CD4-positive, alpha-beta memory T cell (primary cell): ENCODE measurements at regions of chr1 and their contacts with region 1.

Region 1: DNA sequence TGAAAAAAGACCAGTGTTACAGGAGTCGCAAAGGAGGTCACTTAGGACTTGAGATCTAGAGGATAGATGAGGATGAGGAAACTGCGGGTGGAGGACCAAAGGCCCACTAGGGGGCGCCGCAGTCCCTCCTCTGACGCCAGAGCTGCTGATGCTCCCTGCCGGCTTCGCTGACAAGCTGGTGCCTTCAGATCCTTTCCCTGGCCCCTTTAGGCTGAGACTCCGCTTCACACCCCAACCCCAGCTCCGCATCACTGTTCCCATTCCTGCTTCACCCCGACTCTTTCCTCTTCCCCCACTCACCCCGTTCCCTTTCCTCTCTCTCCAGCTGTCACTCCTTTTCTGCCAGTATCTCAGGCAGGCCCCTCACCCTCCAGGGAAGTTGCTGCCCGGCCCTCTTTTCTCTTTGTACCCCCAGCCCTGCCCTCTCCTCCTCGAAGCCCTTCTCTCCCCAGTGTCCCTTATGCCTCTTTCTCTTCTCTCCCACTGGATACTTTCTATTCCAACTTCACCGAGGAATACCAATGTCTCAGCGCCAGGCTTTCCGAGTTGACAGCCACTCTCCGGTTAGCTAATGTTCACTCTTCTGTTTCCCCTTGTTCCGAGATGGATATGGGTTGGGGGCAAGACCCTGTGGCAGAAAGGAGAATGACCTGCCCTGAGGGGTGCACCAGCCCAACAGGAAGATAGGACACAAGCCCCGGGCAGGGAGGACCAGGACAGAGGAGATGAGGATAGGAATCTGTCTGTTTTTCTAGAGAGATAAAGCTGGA is 4.5 kb downstream of the KCNJ9 start:
- DNase-seq: peak; percentile 66 to 68 (median 67)
- H3K4me3 ChIP-seq: no peak overlapping the region
- H3K4me3 Mint-ChIP-seq: peak overlapping the region in 3 of 8 donors; percentile 6 to 70 (median 45)
- H3K27ac ChIP-seq: no peak overlapping the region
- H3K27ac Mint-ChIP-seq: peak overlapping the region in 6 of 7 donors; percentile 51 to 88 (median 78)
- H3K4me1 ChIP-seq: peaks cover 3% of the 10 kb centered on the region
- H3K4me1 Mint-ChIP-seq: peaks cover 8 to 28% (median 19%) of the 10 kb centered on the region in 4 donors
- H3K27me3 ChIP-seq: peaks cover 18% of the 10 kb centered on the region
- H3K27me3 Mint-ChIP-seq: peaks cover 16 to 18% of the 10 kb centered on the region in 2 donors

Region 2: DNA sequence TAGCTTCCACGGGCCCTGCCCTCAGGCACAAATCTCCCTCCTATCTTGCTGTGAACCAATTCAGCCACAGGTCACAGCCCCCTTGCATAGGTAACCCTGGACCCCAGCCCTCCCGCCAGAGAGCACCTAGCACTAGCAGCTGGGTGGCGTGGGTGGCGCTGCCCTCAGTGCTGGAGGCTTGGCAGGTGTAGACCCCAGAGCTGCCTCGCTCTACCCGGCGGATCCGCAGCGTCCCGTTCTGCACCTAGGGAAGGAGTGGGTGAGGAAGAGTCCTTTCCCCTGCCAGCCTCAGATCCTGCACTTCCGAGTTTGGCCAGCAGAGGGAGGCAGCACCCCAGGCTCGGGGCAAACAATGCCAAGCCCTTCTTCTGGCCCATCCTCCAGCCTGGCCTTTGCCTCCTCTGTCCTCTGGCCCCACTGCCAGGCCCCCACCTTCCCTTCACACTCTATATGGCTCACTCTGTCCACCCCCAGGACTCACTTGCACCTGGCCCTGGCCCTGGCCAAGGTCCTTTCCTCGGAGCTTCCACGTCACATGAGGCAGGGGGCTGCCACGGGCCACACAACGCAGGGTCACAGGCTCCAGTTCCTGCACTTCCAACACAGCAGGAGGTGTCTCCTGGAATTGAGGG is 149.5 kb before region 1 on chr1:
- CTCF ChIA-PET with region 1: interaction called, 7 read pairs
- POLR2A ChIA-PET with region 1: no interaction called
- intact Hi-C with region 1: loop called (anchors 2 kb)
- DNase-seq: peak; percentile 69 to 81 (median 73)
- H3K4me3 ChIP-seq: no peak overlapping the region
- H3K4me3 Mint-ChIP-seq: peak overlapping the region in 1 of 8 donors; percentile 26
- H3K27ac ChIP-seq: no peak overlapping the region
- H3K27ac Mint-ChIP-seq: peak overlapping the region in 3 of 7 donors; percentile 40 to 68 (median 45)
- H3K4me1 ChIP-seq: peaks cover 15% of the 10 kb centered on the region
- H3K4me1 Mint-ChIP-seq: peaks cover 0 to 7% (median 3%) of the 10 kb centered on the region in 4 donors
- H3K27me3 ChIP-seq: no peaks in the 10 kb centered on the region
- H3K27me3 Mint-ChIP-seq: peaks cover 6 to 10% of the 10 kb centered on the region in 2 donors

Region 3: DNA sequence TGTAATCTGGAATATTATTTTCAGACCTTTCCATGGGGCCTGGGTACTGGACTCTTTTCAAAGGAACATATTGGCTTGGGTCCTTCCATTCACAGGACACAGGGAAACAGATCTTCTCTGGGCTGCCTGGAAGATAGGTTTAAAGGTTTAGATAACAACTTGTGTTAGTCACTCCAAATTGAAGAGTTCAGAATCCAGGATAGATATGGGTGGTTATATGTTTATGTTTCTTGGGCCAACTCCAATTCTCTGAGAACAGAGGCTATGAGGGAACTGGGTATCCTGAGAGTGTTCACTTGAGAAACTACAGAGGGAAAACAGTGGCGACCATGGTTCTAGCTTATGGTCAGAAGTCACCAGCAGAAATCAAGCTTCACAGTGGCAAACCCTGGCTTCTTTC is 45.4 kb before region 1 on chr1:
- CTCF ChIA-PET with region 1: interaction called, 141 read pairs
- POLR2A ChIA-PET with region 1: no interaction called
- intact Hi-C with region 1: no loop called
- DNase-seq: no peak
- H3K4me3 ChIP-seq: no peak overlapping the region
- H3K4me3 Mint-ChIP-seq: no peak overlapping the region
- H3K27ac ChIP-seq: no peak overlapping the region
- H3K27ac Mint-ChIP-seq: no peak overlapping the region
- H3K4me1 ChIP-seq: no peaks in the 10 kb centered on the region
- H3K4me1 Mint-ChIP-seq: no peaks in the 10 kb centered on the region
- H3K27me3 ChIP-seq: no peaks in the 10 kb centered on the region
- H3K27me3 Mint-ChIP-seq: peaks cover 5 to 6% of the 10 kb centered on the region in 2 donors

Region 4: DNA sequence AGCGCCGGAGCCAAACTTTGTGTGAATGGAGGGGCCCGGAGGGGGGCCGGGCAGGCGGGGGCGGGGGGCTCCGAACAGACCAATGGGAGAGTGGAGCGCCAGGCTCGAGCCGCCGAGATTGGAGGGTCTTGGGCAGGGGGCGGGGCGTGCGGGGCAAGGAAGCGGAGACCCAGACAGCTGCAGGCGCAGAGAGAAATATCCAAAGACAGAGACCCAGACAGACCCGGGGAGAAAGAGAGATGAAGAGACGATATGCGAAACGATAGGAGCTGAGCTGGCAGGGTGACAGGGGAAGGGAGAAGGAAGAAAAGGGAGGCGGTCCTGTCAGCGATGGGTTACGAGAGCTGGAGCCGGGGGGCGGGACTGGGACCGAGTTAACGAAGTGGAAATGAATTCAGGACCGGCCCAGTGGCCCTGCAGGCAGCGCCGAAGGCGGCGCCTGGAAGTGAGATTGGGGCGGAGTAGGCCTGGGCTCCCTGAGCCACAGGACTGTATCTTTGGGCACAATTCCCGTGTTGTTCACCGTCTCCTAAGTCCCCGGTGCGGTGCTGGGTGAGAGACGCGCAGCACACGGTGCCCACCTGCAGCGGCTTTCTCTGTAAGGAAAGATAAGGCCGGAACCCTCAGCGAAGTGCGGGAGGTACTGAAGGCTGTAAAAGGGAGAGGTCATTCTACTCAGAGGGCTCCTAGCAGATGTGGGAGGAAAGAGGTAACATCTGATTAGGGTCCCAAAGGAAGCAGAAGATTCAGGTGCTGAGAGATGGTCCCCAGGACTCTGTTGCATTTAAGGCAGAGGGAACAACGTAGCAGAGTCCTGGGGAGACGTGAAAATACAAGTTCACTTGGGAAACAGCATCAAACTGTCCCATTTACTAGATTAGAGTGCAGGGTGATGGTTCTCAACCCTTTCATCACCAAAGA is 15.4 kb before region 1 on chr1:
- CTCF ChIA-PET with region 1: interaction called, 30 read pairs
- POLR2A ChIA-PET with region 1: no interaction called
- intact Hi-C with region 1: no loop called
- DNase-seq: peak; percentile 47 to 68 (median 51)
- H3K4me3 ChIP-seq: peak overlapping the region in 1 of 2 donors; percentile 60
- H3K4me3 Mint-ChIP-seq: peak overlapping the region; percentile 85 to 97 (median 92)
- H3K27ac ChIP-seq: no peak overlapping the region
- H3K27ac Mint-ChIP-seq: peak overlapping the region in 5 of 7 donors; percentile 53 to 86 (median 60)
- H3K4me1 ChIP-seq: peaks cover 15% of the 10 kb centered on the region
- H3K4me1 Mint-ChIP-seq: peaks cover 6 to 12% (median 9%) of the 10 kb centered on the region in 4 donors
- H3K27me3 ChIP-seq: peaks cover 20% of the 10 kb centered on the region
- H3K27me3 Mint-ChIP-seq: peaks cover 26 to 51% of the 10 kb centered on the region in 2 donors

Region 5: GRCh38 chr1:160144921-160145320 is 59.0 kb after region 1 on chr1:
- CTCF ChIA-PET with region 1: no interaction called
- POLR2A ChIA-PET with region 1: no interaction called
- intact Hi-C with region 1: no loop called
- DNase-seq: no peak
- H3K4me3 ChIP-seq: no peak overlapping the region
- H3K4me3 Mint-ChIP-seq: no peak overlapping the region
- H3K27ac ChIP-seq: no peak overlapping the region
- H3K27ac Mint-ChIP-seq: no peak overlapping the region
- H3K4me1 ChIP-seq: no peaks in the 10 kb centered on the region
- H3K4me1 Mint-ChIP-seq: no peaks in the 10 kb centered on the region
- H3K27me3 ChIP-seq: no peaks in the 10 kb centered on the region
- H3K27me3 Mint-ChIP-seq: peaks cover 11 to 23% of the 10 kb centered on the region in 2 donors

Region 6: GRCh38 chr1:160219062-160219929 is 133.4 kb after region 1 on chr1:
- CTCF ChIA-PET with region 1: no interaction called
- POLR2A ChIA-PET with region 1: no interaction called
- intact Hi-C with region 1: no loop called
- DNase-seq: no peak
- H3K4me3 ChIP-seq: no peak overlapping the region
- H3K4me3 Mint-ChIP-seq: no peak overlapping the region
- H3K27ac ChIP-seq: no peak overlapping the region
- H3K27ac Mint-ChIP-seq: peak overlapping the region in 3 of 7 donors; percentile 7 to 46 (median 16)
- H3K4me1 ChIP-seq: no peaks in the 10 kb centered on the region
- H3K4me1 Mint-ChIP-seq: no peaks in the 10 kb centered on the region
- H3K27me3 ChIP-seq: no peaks in the 10 kb centered on the region
- H3K27me3 Mint-ChIP-seq: no peaks in the 10 kb centered on the region

Region 7: DNA sequence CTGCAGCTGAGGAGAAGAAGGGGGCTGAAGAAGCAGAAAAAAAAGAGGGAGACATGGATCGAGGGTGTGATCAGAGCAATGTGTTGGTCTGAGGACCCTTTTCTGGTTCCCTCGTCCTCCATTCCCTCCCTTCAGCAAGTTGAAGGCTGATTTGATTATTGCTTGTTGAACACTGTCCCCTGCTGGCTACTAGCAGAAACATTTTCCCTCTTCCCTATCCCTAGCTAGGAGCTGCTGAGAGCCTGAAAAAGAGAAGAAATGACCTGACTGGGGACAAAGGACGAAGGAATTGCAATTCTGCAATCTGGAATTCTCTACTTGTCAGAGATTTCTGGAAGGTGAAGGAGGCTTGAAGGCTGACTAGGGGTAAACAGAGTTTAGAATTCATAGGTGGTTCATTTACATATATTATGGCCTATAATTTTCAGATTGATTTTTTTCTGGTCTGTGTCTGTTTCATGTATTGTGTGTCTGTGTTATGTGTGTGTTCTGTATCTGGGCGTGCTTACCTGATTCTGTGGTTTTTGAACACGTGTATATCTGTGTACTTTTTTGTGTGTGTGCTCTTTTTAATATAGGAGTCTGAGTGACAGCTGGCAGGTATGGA is 290.8 kb after region 1 on chr1:
- CTCF ChIA-PET with region 1: interaction called, 23 read pairs
- POLR2A ChIA-PET with region 1: no interaction called
- intact Hi-C with region 1: loop called (anchors 5 kb)
- DNase-seq: peak in 4 of 5 donors; percentile 39 to 46 (median 44)
- H3K4me3 ChIP-seq: no peak overlapping the region
- H3K4me3 Mint-ChIP-seq: peak overlapping the region in 3 of 8 donors; percentile 17 to 62 (median 48)
- H3K27ac ChIP-seq: no peak overlapping the region
- H3K27ac Mint-ChIP-seq: peak overlapping the region in 1 of 7 donors; percentile 31
- H3K4me1 ChIP-seq: peaks cover 14% of the 10 kb centered on the region
- H3K4me1 Mint-ChIP-seq: peaks cover 9 to 16% (median 12%) of the 10 kb centered on the region in 4 donors
- H3K27me3 ChIP-seq: no peaks in the 10 kb centered on the region
- H3K27me3 Mint-ChIP-seq: peaks cover 0 to 1% of the 10 kb centered on the region in 2 donors